ENCODE measurements at regions of chr1 and their contacts with region 1.

Region 1: DNA sequence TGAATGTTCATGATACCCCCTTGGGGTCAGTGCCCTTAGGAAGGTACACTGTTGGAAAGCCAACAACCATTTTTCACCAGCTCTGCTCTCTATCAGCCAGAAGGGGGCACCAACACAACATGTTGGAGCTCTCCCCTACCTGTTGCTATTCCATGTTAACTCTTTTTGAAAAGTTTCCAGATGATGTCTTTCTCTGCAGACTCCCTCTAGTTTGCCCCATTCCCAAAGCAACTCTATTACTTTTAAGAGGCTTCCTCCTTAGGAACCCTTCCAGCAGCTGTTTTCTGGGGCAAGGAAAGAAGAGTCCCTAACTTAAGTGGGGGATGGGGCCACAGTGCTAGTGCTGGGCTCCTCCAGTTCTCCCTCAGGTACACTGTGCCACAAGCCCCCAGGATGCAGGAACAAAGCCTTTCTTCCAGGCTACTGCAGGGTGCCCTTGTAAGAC is 22.9 kb upstream of the NDC1 start:
- DNase-seq: peak; percentile 75
- H3K4me3 Mint-ChIP-seq: no peak overlapping the region
- H3K27ac Mint-ChIP-seq: no peak overlapping the region
- H3K4me1 Mint-ChIP-seq: no peaks in the 10 kb centered on the region
- H3K27me3 Mint-ChIP-seq: no peaks in the 10 kb centered on the region
- CTCF ChIP-seq: peak; percentile 82

Region 2: GRCh38 chr1:53847980-53848379 is 13.0 kb before region 1 on chr1:
- CTCF ChIA-PET with region 1: interaction called, 61 read pairs
- POLR2A ChIA-PET with region 1: no interaction called
- intact Hi-C with region 1: no loop called
- DNase-seq: no peak
- H3K4me3 Mint-ChIP-seq: no peak overlapping the region
- H3K27ac Mint-ChIP-seq: no peak overlapping the region
- H3K4me1 Mint-ChIP-seq: no peaks in the 10 kb centered on the region
- H3K27me3 Mint-ChIP-seq: peaks cover 12% of the 10 kb centered on the region
- CTCF ChIP-seq: no peak

Region 3: DNA sequence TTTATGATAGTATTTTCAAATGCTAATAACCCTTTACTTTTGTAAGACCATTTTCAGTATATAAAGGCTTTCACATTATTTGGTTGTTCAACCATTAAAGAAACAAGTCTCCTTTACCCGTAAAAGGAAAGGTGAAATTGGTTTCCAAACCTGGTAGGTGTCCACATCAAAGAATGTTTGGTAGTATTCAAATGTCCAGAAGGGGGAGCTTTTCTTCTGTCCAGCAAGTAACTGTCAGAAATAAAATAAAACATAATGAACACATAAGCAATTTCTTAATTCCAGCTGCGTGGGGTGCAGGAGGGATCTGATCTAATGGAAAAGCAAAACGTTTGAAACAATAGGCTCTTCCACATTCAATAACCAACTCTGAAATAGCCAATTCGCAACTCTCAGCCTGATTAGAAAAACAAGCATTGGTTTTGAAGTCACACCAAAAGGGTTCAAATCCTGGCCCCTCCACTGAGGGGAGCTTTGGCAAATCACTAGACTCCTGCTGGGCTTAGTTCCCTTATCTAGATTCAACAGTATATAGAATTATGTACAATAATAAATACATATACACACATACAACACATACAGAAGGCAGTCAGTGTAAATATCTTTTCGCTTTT is 17.6 kb after region 1 on chr1:
- CTCF ChIA-PET with region 1: interaction called, 67 read pairs
- POLR2A ChIA-PET with region 1: interaction called, 4 read pairs
- intact Hi-C with region 1: no loop called
- DNase-seq: peak; percentile 59
- H3K4me3 Mint-ChIP-seq: no peak overlapping the region
- H3K27ac Mint-ChIP-seq: no peak overlapping the region
- H3K4me1 Mint-ChIP-seq: no peaks in the 10 kb centered on the region
- H3K27me3 Mint-ChIP-seq: no peaks in the 10 kb centered on the region
- CTCF ChIP-seq: peak; percentile 63

Region 4: GRCh38 chr1:53953063-53953462 is 92.1 kb after region 1 on chr1:
- CTCF ChIA-PET with region 1: interaction called, 154 read pairs
- POLR2A ChIA-PET with region 1: interaction called, 3 read pairs
- intact Hi-C with region 1: loop called (anchors 1 kb)
- DNase-seq: no peak
- H3K4me3 Mint-ChIP-seq: no peak overlapping the region
- H3K27ac Mint-ChIP-seq: no peak overlapping the region
- H3K4me1 Mint-ChIP-seq: peaks cover 21% of the 10 kb centered on the region
- H3K27me3 Mint-ChIP-seq: no peaks in the 10 kb centered on the region
- CTCF ChIP-seq: no peak

Region 5: GRCh38 chr1:54081306-54082270 is 220.6 kb after region 1 on chr1:
- CTCF ChIA-PET with region 1: interaction called, 10 read pairs
- POLR2A ChIA-PET with region 1: no interaction called
- intact Hi-C with region 1: loop called (anchors 1 kb)
- DNase-seq: peak; percentile 84
- H3K4me3 Mint-ChIP-seq: no peak overlapping the region
- H3K27ac Mint-ChIP-seq: peak overlapping the region; percentile 40
- H3K4me1 Mint-ChIP-seq: peaks cover 6% of the 10 kb centered on the region
- H3K27me3 Mint-ChIP-seq: no peaks in the 10 kb centered on the region
- CTCF ChIP-seq: peak; percentile 47

Measured in MCF 10A (cell line).